ENCODE measurements at regions of chr17 and their contacts with region 1.

Region 1: GRCh38 chr17:50139950-50140871 is 10.3 kb upstream of the SAMD14 start:
- DNase-seq: no peak
- H3K4me3 ChIP-seq: no peak overlapping the region
- CTCF ChIP-seq: peak; percentile 94

Region 2: GRCh38 chr17:49987681-49988441 is 152.3 kb before region 1 on chr17:
- CTCF ChIA-PET with region 1: no interaction called
- POLR2A ChIA-PET with region 1: no interaction called
- DNase-seq: no peak
- H3K4me3 ChIP-seq: no peak overlapping the region
- CTCF ChIP-seq: no peak

Region 3: DNA sequence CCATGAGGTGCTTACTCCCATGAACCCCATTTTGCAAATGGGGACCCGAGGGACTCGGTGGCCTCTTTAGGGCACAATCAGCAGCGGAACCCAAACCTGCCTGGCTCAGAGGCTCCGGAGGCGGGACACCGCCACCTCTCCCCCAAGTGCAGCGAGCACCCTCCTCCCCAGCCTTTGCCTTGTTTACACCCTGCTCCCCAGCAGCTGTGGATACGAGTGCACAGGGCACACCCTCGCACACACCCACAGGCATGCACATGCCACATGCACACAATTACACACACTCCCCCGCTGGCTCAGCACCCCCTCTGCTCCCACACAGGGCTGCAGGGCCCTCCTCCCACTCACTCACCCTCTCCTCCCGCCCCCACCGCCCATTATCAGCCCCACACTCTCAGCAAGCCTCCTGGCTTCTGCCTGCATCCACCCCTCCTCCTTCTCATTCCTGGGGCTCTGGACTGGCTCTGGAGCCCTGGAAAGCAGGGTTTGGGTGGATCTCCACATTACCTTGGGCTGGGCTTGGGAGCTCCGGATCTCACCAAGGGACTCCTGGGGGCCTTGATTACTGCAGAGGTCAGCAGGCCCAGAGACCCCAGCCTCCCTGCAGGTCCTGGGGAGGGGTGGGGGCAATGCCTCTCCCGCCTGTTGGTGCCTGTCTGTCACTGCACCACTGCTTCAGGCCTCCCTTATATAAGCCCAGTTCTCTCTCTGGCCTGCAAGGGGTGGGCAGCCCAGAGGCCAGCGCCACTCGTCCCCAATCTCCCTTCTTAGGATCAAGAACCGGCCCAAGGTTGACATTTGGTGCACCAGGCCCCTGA is 38.7 kb before region 1 on chr17:
- CTCF ChIA-PET with region 1: interaction called, 18 read pairs
- POLR2A ChIA-PET with region 1: no interaction called
- DNase-seq: no peak
- H3K4me3 ChIP-seq: no peak overlapping the region
- CTCF ChIP-seq: no peak

Region 4: GRCh38 chr17:50123649-50124349 is 16.4 kb before region 1 on chr17:
- CTCF ChIA-PET with region 1: interaction called, 72 read pairs
- POLR2A ChIA-PET with region 1: no interaction called
- DNase-seq: no peak
- H3K4me3 ChIP-seq: no peak overlapping the region
- CTCF ChIP-seq: no peak

Region 5: DNA sequence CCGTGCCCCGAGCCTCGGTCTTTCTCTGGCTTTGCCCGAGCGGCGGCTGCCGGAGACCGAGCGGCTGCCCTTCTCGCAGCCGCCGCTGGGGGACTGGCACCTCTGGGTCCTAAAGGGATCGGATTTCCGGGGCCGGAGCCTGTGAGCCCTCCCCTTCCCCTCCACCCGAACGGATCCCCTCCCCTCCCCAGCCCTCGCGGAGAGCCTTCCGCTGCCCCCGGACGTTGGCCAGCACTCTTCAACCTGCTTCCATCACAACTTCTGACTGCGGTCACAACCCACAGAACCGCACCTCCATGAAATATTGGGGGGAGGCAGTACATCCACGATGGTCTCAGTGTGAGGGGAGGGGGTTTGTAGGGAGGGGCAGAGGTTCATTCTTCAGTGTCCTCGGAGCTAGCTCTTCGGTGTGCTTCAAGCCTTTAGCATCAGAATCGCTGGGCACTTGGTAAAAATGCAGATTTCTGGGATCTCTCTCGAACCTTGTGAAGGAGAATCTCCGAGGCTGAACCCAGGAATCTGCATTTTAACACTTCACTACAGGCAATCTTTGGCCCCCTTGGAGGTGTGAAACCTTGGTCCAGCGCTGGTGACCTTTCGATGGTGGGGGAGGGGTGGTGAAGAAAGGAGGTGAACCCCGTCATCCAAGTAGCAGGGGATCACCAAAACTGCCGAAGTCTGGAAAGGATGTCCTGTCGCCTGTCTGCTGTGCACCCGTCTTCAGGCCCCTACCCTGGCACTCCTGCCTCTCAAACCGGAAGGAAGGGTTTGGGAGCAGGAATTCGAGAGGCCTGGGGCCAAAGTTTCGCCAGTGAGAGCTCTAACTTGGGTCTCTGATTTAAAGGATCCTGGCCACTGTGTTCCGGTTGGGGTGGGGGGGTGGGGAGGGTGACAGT is 11.1 kb after region 1 on chr17:
- CTCF ChIA-PET with region 1: interaction called, 143 read pairs
- POLR2A ChIA-PET with region 1: interaction called, 4 read pairs
- DNase-seq: no peak
- H3K4me3 ChIP-seq: peak overlapping the region; percentile 77
- CTCF ChIP-seq: peak; percentile 81

Region 6: GRCh38 chr17:50269477-50270434 is 129.5 kb after region 1 on chr17:
- CTCF ChIA-PET with region 1: interaction called, 11 read pairs
- POLR2A ChIA-PET with region 1: no interaction called
- DNase-seq: no peak
- H3K4me3 ChIP-seq: peak overlapping the region; percentile 53
- CTCF ChIP-seq: peak; percentile 80